ENCODE measurements at regions of chr1 and their contacts with region 1.

Region 1: GRCh38 chr1:53878492-53879105 is 11.0 kb downstream of the YIPF1 start:
- DNase-seq: no peak
- ATAC-seq: no peak
- H3K4me3 ChIP-seq: no peak overlapping the region
- H3K27ac ChIP-seq: no peak overlapping the region
- H3K4me1 ChIP-seq: no peaks in the 10 kb centered on the region
- H3K27me3 ChIP-seq: no peaks in the 10 kb centered on the region
- CTCF ChIP-seq: peak; percentile 26 to 68 (median 54)
- POLR2A ChIP-seq: no peak

Region 2: GRCh38 chr1:53811414-53811851 is 67.2 kb before region 1 on chr1:
- intact Hi-C with region 1: loop called in 1 of 10 experiments (anchors 10 kb)
- DNase-seq: no peak
- ATAC-seq: no peak
- H3K4me3 ChIP-seq: no peak overlapping the region
- H3K27ac ChIP-seq: no peak overlapping the region
- H3K4me1 ChIP-seq: no peaks in the 10 kb centered on the region
- H3K27me3 ChIP-seq: no peaks in the 10 kb centered on the region
- CTCF ChIP-seq: no peak
- POLR2A ChIP-seq: no peak

Region 3: GRCh38 chr1:53959664-53960250 is 81.2 kb after region 1 on chr1:
- intact Hi-C with region 1: loop called in 4 of 10 experiments (anchors 5 kb)
- DNase-seq: no peak
- ATAC-seq: no peak
- H3K4me3 ChIP-seq: no peak overlapping the region
- H3K27ac ChIP-seq: no peak overlapping the region
- H3K4me1 ChIP-seq: peaks cover 0 to 19% (median 7%) of the 10 kb centered on the region in 12 donors
- H3K27me3 ChIP-seq: no peaks in the 10 kb centered on the region
- CTCF ChIP-seq: peak; percentile 35 to 67 (median 48)
- POLR2A ChIP-seq: no peak

Region 4: DNA sequence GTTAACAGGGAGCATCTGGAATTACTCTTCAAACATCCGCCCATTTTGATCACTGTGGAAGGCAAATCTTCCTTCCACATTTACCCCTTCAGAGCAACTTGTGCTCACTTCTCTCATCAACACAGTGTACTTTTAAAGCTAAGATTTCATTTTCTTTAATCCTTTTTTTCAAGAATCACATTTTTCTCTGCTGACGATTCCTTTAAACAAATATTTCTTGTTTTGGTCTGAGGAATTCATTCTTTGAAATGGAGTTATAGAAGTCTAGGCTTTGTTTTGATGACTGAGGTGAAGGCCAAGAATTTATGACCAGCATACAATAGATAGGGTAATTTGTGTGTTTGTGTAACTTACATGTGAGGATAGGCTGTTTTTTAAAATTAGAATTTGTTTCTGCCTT is 93.1 kb after region 1 on chr1:
- intact Hi-C with region 1: no loop called
- DNase-seq: no peak
- ATAC-seq: no peak
- H3K4me3 ChIP-seq: no peak overlapping the region
- H3K27ac ChIP-seq: no peak overlapping the region
- H3K4me1 ChIP-seq: peaks cover 0 to 6% (median 0%) of the 10 kb centered on the region in 12 donors
- H3K27me3 ChIP-seq: no peaks in the 10 kb centered on the region
- CTCF ChIP-seq: no peak
- POLR2A ChIP-seq: no peak

Region 5: GRCh38 chr1:55021965-55022546 is 1143.5 kb after region 1 on chr1:
- intact Hi-C with region 1: no loop called
- DNase-seq: peak; percentile 75 to 87 (median 82)
- ATAC-seq: peak; percentile 89 to 99 (median 98)
- H3K4me3 ChIP-seq: no peak overlapping the region
- H3K27ac ChIP-seq: no peak overlapping the region
- H3K4me1 ChIP-seq: peaks cover 0 to 4% (median 0%) of the 10 kb centered on the region in 12 donors
- H3K27me3 ChIP-seq: peaks cover 0 to 18% (median 0%) of the 10 kb centered on the region in 9 donors
- CTCF ChIP-seq: peak; percentile 68 to 86 (median 76)
- POLR2A ChIP-seq: no peak